Motor neuron (in vitro differentiated cells): ENCODE measurements at regions of chr19 and their contacts with region 1.

Region 1: GRCh38 chr19:8505680-8506401 is 3.4 kb upstream of the PRAM1 start:
- ATAC-seq: peak; percentile 84 to 94 (median 89)
- H3K4me3 ChIP-seq: peak overlapping the region; percentile 39 to 47 (median 42)
- H3K27ac ChIP-seq: peak overlapping the region; percentile 67 to 75
- H3K4me1 ChIP-seq: peaks cover 4 to 9% of the 10 kb centered on the region in 2 donors

Region 2: DNA sequence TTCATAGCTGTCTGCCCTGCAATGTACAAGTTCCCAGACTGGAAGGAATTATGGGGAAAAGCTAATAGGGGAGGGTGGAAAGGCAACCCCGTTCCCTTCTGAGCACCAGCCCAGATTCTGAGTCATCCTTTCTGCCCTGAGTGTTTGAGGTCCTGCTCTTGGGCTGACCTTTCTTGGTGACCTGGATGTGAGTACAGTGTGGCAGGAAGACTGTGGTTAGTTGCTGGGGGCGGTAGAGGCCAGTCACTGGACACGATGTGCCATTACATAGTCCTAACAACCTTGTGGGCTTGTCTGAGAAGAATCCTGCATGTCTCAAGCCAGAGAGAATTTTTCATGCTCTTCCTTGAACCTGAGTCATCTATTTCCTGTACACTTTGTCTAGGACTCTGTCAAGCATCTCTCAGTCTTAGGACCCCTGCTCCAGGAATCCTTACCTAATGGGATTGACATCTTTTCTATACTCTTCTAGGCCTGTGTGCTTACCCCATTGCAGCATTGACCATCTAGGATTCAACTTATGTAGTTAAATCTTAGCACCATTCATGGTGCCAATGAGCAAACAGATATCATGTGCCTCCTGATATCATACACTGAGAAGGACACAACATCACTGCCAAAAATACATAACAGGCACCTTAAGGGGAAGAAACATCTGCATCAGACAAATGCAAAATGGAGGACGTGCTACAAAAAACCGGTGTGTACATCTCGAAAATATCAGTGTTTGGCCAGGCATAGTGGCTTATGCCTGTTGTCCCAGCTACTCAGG is 150.0 kb before region 1 on chr19:
- in situ Hi-C with region 1: loop called in 1 of 9 experiments (anchors 10 kb)
- ATAC-seq: peak in 5 of 8 experiments; percentile 20 to 68 (median 49)
- H3K4me3 ChIP-seq: no peak overlapping the region
- H3K27ac ChIP-seq: no peak overlapping the region
- H3K4me1 ChIP-seq: peaks cover 0 to 8% of the 10 kb centered on the region in 2 donors

Region 3: DNA sequence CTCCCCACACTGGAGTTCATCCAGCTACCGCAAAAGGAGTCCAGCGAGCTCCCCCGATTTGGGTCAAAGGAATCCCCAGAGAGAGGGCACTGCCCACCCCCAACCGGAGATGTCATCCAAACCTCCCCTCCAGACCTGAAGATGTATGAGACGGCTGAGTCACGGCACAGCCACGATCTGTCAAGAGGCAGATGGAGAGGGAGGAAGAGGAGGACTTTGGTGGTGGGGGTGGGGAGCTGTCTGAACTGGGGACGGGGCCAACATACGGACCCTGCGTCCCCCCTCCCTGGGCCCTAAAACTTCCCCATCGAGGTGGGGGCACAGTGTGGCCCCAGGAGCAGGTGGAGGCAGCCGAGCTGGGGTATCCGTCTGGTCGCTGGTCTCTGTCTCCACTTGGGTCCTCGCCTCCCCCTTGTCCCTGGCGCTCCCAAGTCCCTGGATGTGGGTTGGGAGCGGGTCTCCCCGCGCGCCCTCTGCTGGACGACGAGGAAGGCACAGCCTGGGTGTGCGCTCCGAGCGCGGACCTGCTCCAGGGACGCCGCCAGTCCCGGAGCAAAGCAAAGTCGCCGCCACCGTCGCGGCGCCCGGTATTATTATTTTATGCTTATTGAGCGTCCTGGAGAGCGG is 1918.3 kb after region 1 on chr19:
- in situ Hi-C with region 1: no loop called
- ATAC-seq: peak; percentile 62 to 77 (median 73)
- H3K4me3 ChIP-seq: peak overlapping the region in 2 of 5 donors; percentile 5 to 10
- H3K27ac ChIP-seq: no peak overlapping the region
- H3K4me1 ChIP-seq: peaks cover 11 to 13% of the 10 kb centered on the region in 2 donors